IMR-90 (cell line): ENCODE measurements at regions of chr1 and their contacts with region 1.

Region 1: DNA sequence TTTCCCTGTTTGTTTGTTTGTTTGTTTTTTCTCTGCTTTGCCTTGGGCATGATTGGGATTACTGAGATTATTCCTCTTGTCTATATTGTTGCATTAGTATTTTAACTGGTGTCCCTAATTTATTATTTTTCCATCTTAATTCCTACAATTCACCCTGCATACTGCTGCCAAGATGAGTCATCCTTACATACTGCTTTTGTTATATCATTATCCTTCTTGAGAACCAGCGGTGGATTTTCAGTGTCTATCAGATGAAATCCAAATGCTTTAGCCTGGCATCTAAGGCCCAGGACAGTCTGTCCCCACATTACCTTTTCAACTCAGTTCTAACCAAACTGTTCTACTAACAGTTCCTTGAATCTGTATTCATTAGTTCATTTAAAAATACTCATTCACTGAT is 101.7 kb downstream of the OLFML2B start:
- DNase-seq: peak; percentile 68
- ATAC-seq: peak; percentile 66
- H3K4me3 ChIP-seq: no peak overlapping the region
- H3K27ac ChIP-seq: no peak overlapping the region
- H3K4me1 ChIP-seq: no peaks in the 10 kb centered on the region; the same call in 1 of the 2 replicates
- H3K27me3 ChIP-seq: no peaks in the 10 kb centered on the region
- CTCF ChIP-seq: no peak
- POLR2A ChIP-seq: no peak
- RAD21 ChIP-seq: no peak

Region 2: GRCh38 chr1:161884475-161884874 is 37.5 kb before region 1 on chr1:
- CTCF ChIA-PET with region 1: no interaction called
- POLR2A ChIA-PET with region 1: no interaction called
- dilution Hi-C with region 1: no loop called
- in situ Hi-C with region 1: no loop called
- intact Hi-C with region 1: loop called (anchors 5 kb)
- DNase-seq: no peak
- ATAC-seq: no peak
- H3K4me3 ChIP-seq: no peak overlapping the region
- H3K27ac ChIP-seq: peak overlapping the region; percentile 35; the same call in 1 of the 2 replicates
- H3K4me1 ChIP-seq: peaks cover 1% of the 10 kb centered on the region
- H3K27me3 ChIP-seq: no peaks in the 10 kb centered on the region
- CTCF ChIP-seq: no peak
- POLR2A ChIP-seq: no peak
- RAD21 ChIP-seq: no peak